ENCODE measurements at regions of chr4 and their contacts with region 1.

Region 1: GRCh38 chr4:146342600-146343192 is 128.4 kb downstream of the REELD1 start:
- DNase-seq: no peak
- H3K4me3 ChIP-seq: no peak overlapping the region
- H3K27ac ChIP-seq: no peak overlapping the region
- H3K4me1 ChIP-seq: no peaks in the 10 kb centered on the region
- H3K27me3 ChIP-seq: no peaks in the 10 kb centered on the region
- CTCF ChIP-seq: peak; percentile 37 to 62 (median 52)
- EP300 ChIP-seq: no peak
- POLR2A ChIP-seq: no peak

Region 2: DNA sequence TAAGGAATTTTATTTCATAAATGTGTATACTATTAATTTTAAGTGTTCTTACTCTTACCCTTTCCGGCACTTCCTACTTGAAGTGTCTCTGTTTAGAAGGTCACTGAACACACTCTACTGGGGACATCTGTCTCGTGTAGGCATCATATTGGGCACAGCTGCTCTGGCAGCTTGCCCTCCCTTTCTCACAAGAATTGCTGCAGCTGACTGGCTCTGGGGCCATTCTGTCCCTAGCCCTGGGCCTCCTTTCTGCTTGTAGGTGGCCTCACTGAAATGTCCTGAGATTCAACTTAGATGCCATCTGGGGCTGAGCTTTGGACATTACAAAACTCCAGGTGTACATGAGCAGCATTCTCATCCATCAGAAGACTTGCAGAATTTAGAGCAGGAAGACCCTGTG is 811.5 kb before region 1 on chr4:
- in situ Hi-C with region 1: no loop called
- intact Hi-C with region 1: no loop called
- DNase-seq: peak; percentile 13
- H3K4me3 ChIP-seq: no peak overlapping the region
- H3K27ac ChIP-seq: no peak overlapping the region
- H3K4me1 ChIP-seq: peaks cover 0 to 26% (median 6%) of the 10 kb centered on the region in 4 donors
- H3K27me3 ChIP-seq: no peaks in the 10 kb centered on the region
- CTCF ChIP-seq: no peak
- EP300 ChIP-seq: no peak
- POLR2A ChIP-seq: no peak

Region 3: DNA sequence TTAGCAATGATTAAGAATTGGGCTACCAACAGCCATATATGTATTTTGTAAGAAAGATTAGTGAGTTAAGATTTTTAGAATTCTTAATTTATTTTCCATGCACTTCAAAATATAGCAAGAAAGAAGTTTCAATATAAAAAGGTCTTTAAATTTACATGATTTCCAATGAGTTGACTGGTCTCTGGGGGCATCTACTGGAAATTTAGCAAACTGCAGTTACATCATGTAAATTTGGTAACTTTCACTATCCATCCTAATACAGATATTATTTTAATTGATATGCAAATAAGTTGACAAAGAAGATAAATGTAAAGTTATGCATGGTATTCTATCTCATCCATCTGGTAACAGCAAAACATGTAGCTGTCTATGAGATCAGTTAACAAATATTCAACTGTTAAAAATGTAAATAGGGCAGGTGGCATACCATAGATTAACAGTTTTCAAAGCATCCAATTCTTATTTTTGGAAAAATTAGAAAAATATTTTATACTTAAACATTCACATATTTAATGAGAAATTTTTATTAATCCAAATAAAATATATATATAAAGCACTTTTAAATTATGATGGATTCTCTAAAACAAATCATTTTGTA is 573.9 kb after region 1 on chr4:
- in situ Hi-C with region 1: loop called in 3 of 4 experiments (anchors 25 kb)
- intact Hi-C with region 1: no loop called
- DNase-seq: no peak
- H3K4me3 ChIP-seq: no peak overlapping the region
- H3K27ac ChIP-seq: no peak overlapping the region
- H3K4me1 ChIP-seq: no peaks in the 10 kb centered on the region
- H3K27me3 ChIP-seq: no peaks in the 10 kb centered on the region
- CTCF ChIP-seq: peak; percentile 45 to 62 (median 51)
- EP300 ChIP-seq: no peak
- POLR2A ChIP-seq: no peak

Region 4: GRCh38 chr4:147480891-147481576 is 1138.3 kb after region 1 on chr4 and contains the start of gene EDNRA:
- in situ Hi-C with region 1: no loop called
- intact Hi-C with region 1: no loop called
- DNase-seq: no peak
- H3K4me3 ChIP-seq: peak within 1 kb of the TSS in 3 of 4 donors; percentile 26 to 49 (median 30)
- H3K27ac ChIP-seq: peak within 1 kb of the TSS; percentile 34 to 58 (median 46)
- H3K4me1 ChIP-seq: peaks cover 0 to 5% (median 2%) of the 10 kb centered on the region in 4 donors
- H3K27me3 ChIP-seq: peaks cover 29% of the 10 kb centered on the region
- CTCF ChIP-seq: no peak
- EP300 ChIP-seq: no peak
- POLR2A ChIP-seq: no peak
- total RNA-seq, gene EDNRA: 0.55 to 3.8 (median 1.1) TPM in 3 of 4 donors, not detected in the other